ENCODE measurements at regions of chrX and their contacts with region 1.

Region 1: DNA sequence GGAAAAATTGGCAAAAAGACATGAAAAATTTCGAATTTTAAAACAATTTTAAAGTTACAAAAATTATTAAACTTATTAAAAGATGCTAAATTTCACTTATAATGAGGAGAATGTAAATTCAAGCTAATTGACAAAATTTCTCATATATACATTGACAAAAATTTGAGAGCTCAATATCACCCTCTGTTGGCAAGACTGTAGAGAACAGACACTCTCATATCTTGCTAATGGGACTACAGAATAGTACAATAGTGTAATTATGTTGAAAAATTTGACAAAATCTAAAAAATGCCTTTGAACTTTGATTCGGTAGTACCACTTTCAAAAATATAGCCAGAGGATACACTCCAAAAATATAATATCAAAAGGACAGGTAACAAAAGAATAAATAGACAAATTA is 29.8 kb downstream of the DCAF8L2 start:
- DNase-seq: no peak
- ATAC-seq: no peak
- H3K4me3 Mint-ChIP-seq: no peak overlapping the region
- H3K27ac Mint-ChIP-seq: no peak overlapping the region
- H3K4me1 Mint-ChIP-seq: no peaks in the 10 kb centered on the region
- H3K27me3 Mint-ChIP-seq: no peaks in the 10 kb centered on the region

Region 2: DNA sequence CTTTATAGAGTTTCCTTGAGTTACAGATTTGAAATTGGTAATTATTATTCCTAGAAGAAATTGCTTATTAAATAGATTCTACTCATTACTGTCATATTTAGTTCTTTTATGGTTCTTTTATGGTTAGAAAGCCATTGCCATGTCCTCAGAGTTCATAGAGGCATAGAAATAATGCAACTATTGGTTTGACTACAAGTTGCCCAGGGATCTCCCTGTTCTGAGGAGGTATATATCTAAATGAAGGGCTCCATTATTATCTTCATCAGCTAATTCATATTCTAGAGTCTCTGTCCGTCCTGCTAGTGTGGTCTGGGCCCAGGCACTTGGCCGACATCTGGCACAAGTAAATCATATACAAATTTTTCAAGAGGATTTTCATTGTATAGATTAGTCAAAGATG is 692.6 kb before region 1 on chrX:
- CTCF ChIA-PET with region 1: no interaction called
- POLR2A ChIA-PET with region 1: no interaction called
- intact Hi-C with region 1: no loop called
- DNase-seq: no peak
- ATAC-seq: no peak
- H3K4me3 Mint-ChIP-seq: no peak overlapping the region
- H3K27ac Mint-ChIP-seq: no peak overlapping the region
- H3K4me1 Mint-ChIP-seq: no peaks in the 10 kb centered on the region
- H3K27me3 Mint-ChIP-seq: no peaks in the 10 kb centered on the region

Region 3: DNA sequence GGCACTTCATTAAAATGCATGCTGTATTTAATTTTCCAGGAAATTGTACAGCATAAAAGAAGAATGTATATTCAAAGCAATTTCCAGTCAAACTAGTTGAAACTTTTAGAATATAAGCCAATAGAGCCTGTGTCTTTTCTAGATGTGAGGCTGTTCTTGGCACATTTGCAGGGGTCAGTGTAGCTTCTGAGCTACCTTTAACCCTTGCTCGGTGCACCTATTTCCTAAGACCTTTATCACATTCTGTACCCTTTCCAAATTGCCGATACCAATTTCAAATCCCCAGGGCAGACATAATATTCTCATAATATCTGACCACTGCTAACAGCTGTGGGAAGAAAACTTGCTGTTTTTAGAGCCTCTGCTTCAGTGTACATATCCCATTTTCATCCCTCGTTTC is 13.4 kb after region 1 on chrX:
- CTCF ChIA-PET with region 1: no interaction called
- POLR2A ChIA-PET with region 1: no interaction called
- intact Hi-C with region 1: loop called in 1 of 2 experiments (anchors 1 kb)
- DNase-seq: no peak
- ATAC-seq: no peak
- H3K4me3 Mint-ChIP-seq: no peak overlapping the region
- H3K27ac Mint-ChIP-seq: no peak overlapping the region
- H3K4me1 Mint-ChIP-seq: no peaks in the 10 kb centered on the region
- H3K27me3 Mint-ChIP-seq: no peaks in the 10 kb centered on the region

Measured in activated CD4-positive, alpha-beta T cell treated with anti-CD3 and anti-CD28 coated beads for 36 hours (primary cell).